ENCODE measurements at regions of chrX and their contacts with region 1.

Region 1: DNA sequence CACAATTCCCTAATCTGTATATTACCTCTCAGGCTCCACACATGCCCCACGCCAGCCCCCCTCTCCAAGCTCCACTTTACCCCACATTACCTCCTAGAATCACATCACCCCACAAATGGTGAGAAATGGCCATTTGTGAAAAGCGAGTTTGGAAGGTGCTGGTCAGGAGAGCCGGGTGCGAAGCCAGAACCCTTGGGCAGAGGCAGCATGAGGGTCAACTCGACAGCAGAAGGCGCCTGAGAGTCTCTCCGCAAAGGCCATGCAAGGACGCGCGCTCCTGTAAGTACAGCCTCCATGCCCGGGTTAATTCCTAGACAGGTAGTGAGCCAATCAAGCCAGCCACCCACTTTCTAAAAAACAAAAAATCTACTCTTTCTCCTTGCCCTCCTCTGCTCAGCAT is 42.4 kb downstream of the RHOXF2 start:
- DNase-seq: no peak
- H3K4me3 ChIP-seq: no peak overlapping the region
- H3K27ac ChIP-seq: no peak overlapping the region
- H3K4me1 ChIP-seq: no peaks in the 10 kb centered on the region
- H3K27me3 ChIP-seq: peaks cover 20% of the 10 kb centered on the region
- CTCF ChIP-seq: no peak

Region 2: DNA sequence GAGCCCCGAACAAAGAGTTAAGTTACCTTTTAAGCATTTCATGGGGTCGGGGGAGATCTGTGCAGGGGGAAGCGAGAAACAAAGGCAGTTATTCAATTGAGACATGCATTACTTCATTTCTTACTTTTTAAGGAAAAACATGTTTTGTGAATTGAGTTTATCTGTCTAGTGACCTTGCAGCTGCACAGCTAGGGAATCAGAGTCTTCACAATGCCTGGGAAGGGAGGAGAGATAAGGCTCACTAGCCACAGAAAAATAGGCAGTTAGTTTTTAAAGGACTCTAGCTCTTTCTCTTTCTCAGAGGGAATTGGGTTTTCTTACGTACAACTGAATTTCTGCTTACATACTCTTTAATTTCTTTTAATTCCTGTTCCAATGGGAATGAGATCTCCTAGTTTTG is 23.5 kb after region 1 on chrX:
- CTCF ChIA-PET with region 1: interaction called, 11 read pairs
- POLR2A ChIA-PET with region 1: no interaction called
- intact Hi-C with region 1: no loop called
- DNase-seq: no peak
- H3K4me3 ChIP-seq: no peak overlapping the region
- H3K27ac ChIP-seq: no peak overlapping the region
- H3K4me1 ChIP-seq: no peaks in the 10 kb centered on the region
- H3K27me3 ChIP-seq: no peaks in the 10 kb centered on the region
- CTCF ChIP-seq: no peak